PC-9 (cell line): ENCODE measurements at regions of chrX and their contacts with region 1.

Region 1: DNA sequence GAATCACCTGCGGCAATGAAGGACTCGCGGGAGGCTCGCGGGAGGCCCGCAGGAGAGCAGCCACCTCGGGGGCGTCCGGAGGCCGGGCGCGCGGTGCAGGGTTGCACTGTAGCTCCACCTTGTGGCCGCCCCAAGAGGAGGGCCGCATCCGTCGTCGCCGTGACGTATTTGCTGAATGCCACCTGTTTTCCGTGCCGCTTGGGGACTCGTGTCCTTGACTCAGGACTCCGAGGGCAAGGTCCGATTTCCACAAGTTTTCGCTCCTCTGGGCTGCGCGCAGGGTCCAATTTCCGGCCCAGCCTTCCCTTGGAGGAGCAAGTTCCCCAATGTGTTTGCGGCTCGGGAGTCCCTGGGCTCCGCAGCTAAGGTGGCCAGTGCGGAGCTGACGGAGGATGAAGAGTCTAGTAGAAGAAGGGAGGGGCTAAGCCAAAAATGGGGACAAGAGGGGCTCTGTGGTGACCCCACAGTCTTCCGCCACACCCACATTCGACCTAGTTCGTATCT is 10.7 kb upstream of the DLG3 start:
- DNase-seq: peak; percentile 44 to 81
- H3K4me3 ChIP-seq: peak overlapping the region; percentile 70
- H3K27ac ChIP-seq: 0 out of 2 replicates have a peak overlapping the region, but pooled peaks have one; percentile 37
- H3K4me1 ChIP-seq: 0 out of 2 replicates have a peak, but pooled peaks cover 7% of the 10 kb centered on the region
- H3K27me3 ChIP-seq: no peaks in the 10 kb centered on the region
- CTCF ChIP-seq: peak; percentile 75

Region 2: GRCh38 chrX:69429339-69430015 is 1004.4 kb before region 1 on chrX:
- CTCF ChIA-PET with region 1: no interaction called
- POLR2A ChIA-PET with region 1: interaction called, 15 read pairs
- intact Hi-C with region 1: no loop called
- DNase-seq: no peak
- H3K4me3 ChIP-seq: no peak overlapping the region
- H3K27ac ChIP-seq: no peak overlapping the region
- H3K4me1 ChIP-seq: no peaks in the 10 kb centered on the region
- H3K27me3 ChIP-seq: peaks cover 15% of the 10 kb centered on the region; the same call in 1 of the 2 replicates
- CTCF ChIP-seq: no peak

Region 3: DNA sequence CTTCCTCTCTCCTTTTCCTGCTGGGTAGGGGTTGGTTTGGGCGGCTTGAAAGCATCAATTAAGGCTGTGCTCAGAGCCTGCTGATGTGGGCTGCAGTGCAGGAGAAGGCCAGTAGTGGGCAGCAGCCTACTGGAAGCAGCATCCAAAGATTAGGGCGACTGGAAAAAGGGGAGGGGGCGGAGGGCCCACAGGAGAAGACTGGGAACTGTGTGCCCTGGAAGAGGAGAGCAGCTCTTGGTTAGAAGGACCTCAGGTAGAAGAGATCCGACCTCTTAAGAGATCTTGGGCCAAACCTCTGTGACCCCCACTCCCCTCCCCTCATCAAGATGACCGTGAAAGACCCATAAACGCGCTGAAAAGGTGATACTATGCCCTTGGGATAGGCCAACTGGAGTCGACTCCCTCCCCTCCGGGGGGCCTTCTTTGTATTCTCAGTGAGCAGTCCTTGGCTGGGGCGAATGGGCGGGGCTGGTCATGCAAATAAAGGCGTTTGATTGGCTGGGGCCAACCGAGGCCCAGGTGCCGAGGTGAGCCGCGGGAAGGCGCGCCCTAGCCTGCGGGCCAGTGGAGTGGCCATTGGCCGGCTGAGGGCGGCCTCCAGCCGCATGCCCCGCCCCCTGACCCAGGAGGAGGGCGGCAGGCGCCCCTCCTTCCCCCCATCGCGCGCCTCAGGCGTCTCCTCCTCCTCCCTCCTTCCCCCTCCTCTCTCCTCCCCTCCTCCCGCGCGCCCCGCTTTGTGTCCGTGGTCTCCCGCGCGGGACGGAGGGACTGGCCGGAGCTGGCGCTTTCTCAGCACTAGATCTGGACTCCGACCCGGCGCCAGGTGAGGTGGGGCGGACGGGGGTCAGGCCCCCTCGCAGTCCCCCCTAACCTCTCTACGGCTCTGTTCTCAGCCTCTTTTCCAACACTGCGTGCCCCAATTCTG is 20.8 kb after region 1 on chrX:
- CTCF ChIA-PET with region 1: no interaction called
- POLR2A ChIA-PET with region 1: no interaction called
- intact Hi-C with region 1: loop called (anchors 1 kb)
- DNase-seq: peak; percentile 90 to 94
- H3K4me3 ChIP-seq: peak overlapping the region; percentile 83
- H3K27ac ChIP-seq: peak overlapping the region; percentile 57
- H3K4me1 ChIP-seq: peaks cover 35% of the 10 kb centered on the region
- H3K27me3 ChIP-seq: no peaks in the 10 kb centered on the region
- CTCF ChIP-seq: peak; percentile 93

Region 4: DNA sequence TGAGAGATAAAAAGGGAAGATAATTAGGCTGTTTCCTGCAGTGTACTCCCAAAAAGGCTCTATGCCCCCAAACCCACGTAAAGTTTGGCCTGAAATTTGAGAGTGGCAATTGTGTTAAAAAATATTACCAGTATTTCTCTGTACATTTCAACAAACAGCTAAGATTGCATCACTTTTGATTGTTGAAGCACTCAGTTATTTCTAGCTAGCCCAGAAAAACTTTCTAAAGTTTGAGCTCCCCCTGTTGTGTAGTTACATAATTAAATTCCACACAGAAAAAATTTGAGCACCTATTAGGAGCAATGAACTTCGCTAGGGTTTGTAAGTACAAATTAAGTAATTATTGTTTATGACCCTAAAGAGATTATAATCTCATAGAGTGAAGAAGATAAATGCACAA is 120.2 kb after region 1 on chrX:
- CTCF ChIA-PET with region 1: no interaction called
- POLR2A ChIA-PET with region 1: no interaction called
- intact Hi-C with region 1: loop called (anchors 5 kb)
- DNase-seq: peak in 1 of 2 experiments; percentile 35
- H3K4me3 ChIP-seq: no peak overlapping the region
- H3K27ac ChIP-seq: peak overlapping the region; percentile 66
- H3K4me1 ChIP-seq: peaks cover 12% of the 10 kb centered on the region
- H3K27me3 ChIP-seq: no peaks in the 10 kb centered on the region
- CTCF ChIP-seq: peak; percentile 52; the same call in 1 of the 2 replicates

Region 5: DNA sequence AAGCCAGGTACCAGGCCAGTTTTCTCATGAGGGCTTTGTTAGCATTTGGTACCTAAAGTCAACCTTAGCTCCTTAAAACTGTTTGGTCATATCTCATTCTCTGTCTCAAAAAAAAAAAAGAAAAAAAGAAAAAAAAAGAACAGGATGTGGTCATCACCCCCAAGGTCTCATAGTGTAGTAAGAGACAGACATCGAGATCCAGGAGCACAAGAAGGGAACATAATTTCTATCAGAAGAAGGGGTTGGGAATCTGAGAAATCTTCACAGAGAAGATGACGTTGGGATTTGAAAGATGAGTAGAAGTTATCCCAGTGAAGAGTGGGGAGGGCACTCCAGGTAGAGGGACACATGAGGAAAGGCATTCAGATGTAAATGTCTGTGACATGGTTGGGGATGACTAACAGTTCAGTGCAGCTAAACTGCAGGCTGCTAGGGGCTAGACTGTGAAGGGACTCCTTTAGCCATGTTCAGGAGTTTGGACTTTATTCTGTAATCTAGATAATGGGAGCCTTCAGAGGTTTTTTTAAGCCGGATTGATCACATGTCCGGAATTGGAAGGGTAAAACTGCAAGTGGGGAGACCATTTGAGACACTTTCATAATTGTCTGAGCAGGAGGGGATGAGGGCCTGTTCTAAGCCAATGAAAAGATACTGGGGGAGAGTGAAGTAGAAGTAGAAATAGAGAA is 762.2 kb after region 1 on chrX:
- CTCF ChIA-PET with region 1: no interaction called
- POLR2A ChIA-PET with region 1: interaction called, 11 read pairs
- intact Hi-C with region 1: no loop called
- DNase-seq: no peak
- H3K4me3 ChIP-seq: no peak overlapping the region
- H3K27ac ChIP-seq: no peak overlapping the region
- H3K4me1 ChIP-seq: no peaks in the 10 kb centered on the region
- H3K27me3 ChIP-seq: no peaks in the 10 kb centered on the region
- CTCF ChIP-seq: no peak